Right cardiac atrium (tissue), 5 donors: ENCODE measurements at regions of chr10 and their contacts with region 1.

Region 1: GRCh38 chr10:97914837-97915211 is 65.2 kb downstream of the GOLGA7B start:
- DNase-seq: peak; percentile 79 to 91 (median 91)
- ATAC-seq: peak; percentile 76 to 86
- H3K4me3 ChIP-seq: no peak overlapping the region
- H3K27ac ChIP-seq: no peak overlapping the region
- H3K4me1 ChIP-seq: peaks cover 2% of the 10 kb centered on the region
- H3K27me3 ChIP-seq: no peaks in the 10 kb centered on the region

Region 2: DNA sequence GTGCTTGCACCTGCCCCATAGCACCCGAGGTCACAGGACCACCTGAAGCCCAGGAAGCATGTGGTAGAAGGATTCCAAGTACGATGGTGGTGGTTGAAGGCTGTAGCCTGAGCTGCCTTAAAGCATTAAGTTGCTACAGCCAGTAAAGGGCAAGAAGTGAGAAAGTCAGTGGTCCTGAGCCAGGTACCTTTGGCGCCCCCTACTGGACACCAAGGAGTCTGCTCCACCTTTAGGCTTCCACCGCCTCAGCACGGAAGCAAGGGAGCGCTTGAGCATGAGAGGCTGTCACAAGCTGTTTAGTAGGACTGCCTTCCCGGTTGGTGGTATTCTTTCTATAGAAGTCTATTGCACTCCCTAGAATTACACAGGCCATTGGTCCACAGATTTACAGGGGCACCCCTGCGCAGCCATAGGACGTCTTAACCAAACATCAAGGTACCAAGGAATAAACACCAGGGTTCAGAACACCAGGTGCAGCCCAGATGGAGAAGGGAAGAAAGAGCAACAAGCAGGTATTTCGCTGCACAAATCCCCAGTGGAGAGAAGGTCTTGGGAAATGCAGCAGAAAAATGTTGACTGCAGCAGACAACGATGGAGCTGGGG is 113.4 kb after region 1 on chr10:
- intact Hi-C with region 1: loop called in 3 of 4 experiments (anchors 5 to 10 kb)
- DNase-seq: peak; percentile 49 to 70 (median 68)
- ATAC-seq: peak; percentile 25 to 41
- H3K4me3 ChIP-seq: no peak overlapping the region
- H3K27ac ChIP-seq: no peak overlapping the region
- H3K4me1 ChIP-seq: no peaks in the 10 kb centered on the region
- H3K27me3 ChIP-seq: no peaks in the 10 kb centered on the region

Region 3: GRCh38 chr10:98045785-98046389 is 131.1 kb after region 1 on chr10:
- intact Hi-C with region 1: loop called in 3 of 4 experiments (anchors 2 to 5 kb)
- DNase-seq: peak; percentile 30 to 64 (median 61)
- ATAC-seq: peak; percentile 41 to 63
- H3K4me3 ChIP-seq: no peak overlapping the region
- H3K27ac ChIP-seq: no peak overlapping the region
- H3K4me1 ChIP-seq: peaks cover 3% of the 10 kb centered on the region
- H3K27me3 ChIP-seq: no peaks in the 10 kb centered on the region

Region 4: DNA sequence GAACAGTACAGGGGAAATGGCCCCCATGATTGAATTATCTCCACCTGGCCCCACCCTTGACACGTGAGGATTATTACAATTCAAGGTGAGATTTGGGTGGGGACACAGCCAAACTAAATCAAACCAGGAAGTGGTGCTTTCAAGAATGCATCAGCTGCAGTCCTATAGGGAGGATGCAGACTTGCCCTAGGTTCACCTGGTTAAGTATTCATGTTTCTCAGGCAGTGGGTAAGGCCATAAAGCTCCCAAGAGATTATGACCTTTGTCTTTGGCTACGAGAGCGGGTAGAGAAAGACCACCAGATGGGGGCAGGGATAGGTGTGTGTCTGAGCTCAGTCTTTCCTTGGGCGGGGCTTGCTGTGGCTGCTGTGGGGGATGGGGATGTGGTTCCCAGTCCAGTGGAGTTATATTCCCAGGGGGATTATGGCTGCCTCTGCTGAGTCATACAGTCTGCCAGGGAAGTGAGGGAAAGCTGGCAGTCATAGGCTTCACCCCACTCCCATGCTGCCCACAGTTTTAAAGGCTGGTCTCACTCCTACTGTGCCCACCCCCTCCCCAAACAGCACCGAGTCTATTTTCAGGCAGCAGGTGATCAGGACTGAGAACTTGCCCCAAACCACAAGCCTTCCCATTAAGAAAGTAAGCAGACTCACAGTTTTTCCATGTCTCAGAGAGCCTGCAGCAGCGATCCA is 211.3 kb after region 1 on chr10:
- intact Hi-C with region 1: no loop called
- DNase-seq: no peak
- ATAC-seq: no peak
- H3K4me3 ChIP-seq: no peak overlapping the region
- H3K27ac ChIP-seq: no peak overlapping the region
- H3K4me1 ChIP-seq: no peaks in the 10 kb centered on the region
- H3K27me3 ChIP-seq: no peaks in the 10 kb centered on the region

Region 5: GRCh38 chr10:98262571-98262970 is 347.7 kb after region 1 on chr10:
- intact Hi-C with region 1: loop called in 1 of 4 experiments (anchors 10 kb)
- DNase-seq: peak; percentile 50 to 78 (median 72)
- ATAC-seq: peak; percentile 47 to 54
- H3K4me3 ChIP-seq: no peak overlapping the region
- H3K27ac ChIP-seq: no peak overlapping the region
- H3K4me1 ChIP-seq: peaks cover 1% of the 10 kb centered on the region
- H3K27me3 ChIP-seq: no peaks in the 10 kb centered on the region

Region 6: GRCh38 chr10:98309366-98310355 is 394.8 kb after region 1 on chr10:
- intact Hi-C with region 1: loop called in 1 of 4 experiments (anchors 10 kb)
- DNase-seq: peak; percentile 73 to 89 (median 87)
- ATAC-seq: peak; percentile 94 to 96
- H3K4me3 ChIP-seq: no peak overlapping the region
- H3K27ac ChIP-seq: no peak overlapping the region
- H3K4me1 ChIP-seq: no peaks in the 10 kb centered on the region
- H3K27me3 ChIP-seq: no peaks in the 10 kb centered on the region

Region 7: GRCh38 chr10:99248824-99249223 is 1334.0 kb after region 1 on chr10:
- intact Hi-C with region 1: loop called in 1 of 4 experiments (anchors 10 kb)
- DNase-seq: no peak
- ATAC-seq: no peak
- H3K4me3 ChIP-seq: no peak overlapping the region
- H3K27ac ChIP-seq: no peak overlapping the region
- H3K4me1 ChIP-seq: no peaks in the 10 kb centered on the region
- H3K27me3 ChIP-seq: no peaks in the 10 kb centered on the region